BJ (cell line): ENCODE measurements at regions of chr17 and their contacts with region 1.

Region 1: GRCh38 chr17:32659419-32659842 is 172.6 kb downstream of the CDK5R1 start:
- DNase-seq: peak; percentile 12
- H3K4me3 ChIP-seq: no peak overlapping the region
- H3K27me3 ChIP-seq: no peaks in the 10 kb centered on the region
- CTCF ChIP-seq: peak; percentile 94

Region 2: GRCh38 chr17:32569171-32570080 is 90.0 kb before region 1 on chr17:
- CTCF ChIA-PET with region 1: no interaction called
- POLR2A ChIA-PET with region 1: no interaction called
- DNase-seq: no peak
- H3K4me3 ChIP-seq: no peak overlapping the region
- H3K27me3 ChIP-seq: no peaks in the 10 kb centered on the region
- CTCF ChIP-seq: no peak

Region 3: GRCh38 chr17:32627239-32627996 is 32.0 kb before region 1 on chr17:
- CTCF ChIA-PET with region 1: no interaction called
- POLR2A ChIA-PET with region 1: no interaction called
- DNase-seq: no peak
- H3K4me3 ChIP-seq: no peak overlapping the region
- H3K27me3 ChIP-seq: no peaks in the 10 kb centered on the region
- CTCF ChIP-seq: no peak

Region 4: DNA sequence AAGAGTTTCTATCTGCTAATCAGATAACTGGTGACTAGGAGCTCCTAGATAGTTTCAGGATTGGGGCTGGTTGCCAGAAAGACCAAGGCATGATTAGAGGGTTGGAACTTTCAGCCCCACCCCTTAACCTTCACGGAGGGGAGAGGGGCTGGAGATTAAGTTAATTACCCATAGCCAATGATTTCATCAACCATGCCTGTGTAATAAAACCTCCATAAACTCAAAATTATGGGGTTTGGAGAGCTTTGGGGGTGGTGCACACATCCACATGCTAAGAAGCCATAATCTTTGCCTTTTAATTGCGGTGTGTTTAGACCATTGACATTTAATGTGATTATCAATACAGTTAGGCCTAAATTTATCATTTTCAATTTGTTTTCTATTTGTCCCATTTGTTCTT is 11.0 kb before region 1 on chr17:
- CTCF ChIA-PET with region 1: interaction called, 12 read pairs
- POLR2A ChIA-PET with region 1: no interaction called
- DNase-seq: no peak
- H3K4me3 ChIP-seq: no peak overlapping the region
- H3K27me3 ChIP-seq: no peaks in the 10 kb centered on the region
- CTCF ChIP-seq: no peak

Region 5: DNA sequence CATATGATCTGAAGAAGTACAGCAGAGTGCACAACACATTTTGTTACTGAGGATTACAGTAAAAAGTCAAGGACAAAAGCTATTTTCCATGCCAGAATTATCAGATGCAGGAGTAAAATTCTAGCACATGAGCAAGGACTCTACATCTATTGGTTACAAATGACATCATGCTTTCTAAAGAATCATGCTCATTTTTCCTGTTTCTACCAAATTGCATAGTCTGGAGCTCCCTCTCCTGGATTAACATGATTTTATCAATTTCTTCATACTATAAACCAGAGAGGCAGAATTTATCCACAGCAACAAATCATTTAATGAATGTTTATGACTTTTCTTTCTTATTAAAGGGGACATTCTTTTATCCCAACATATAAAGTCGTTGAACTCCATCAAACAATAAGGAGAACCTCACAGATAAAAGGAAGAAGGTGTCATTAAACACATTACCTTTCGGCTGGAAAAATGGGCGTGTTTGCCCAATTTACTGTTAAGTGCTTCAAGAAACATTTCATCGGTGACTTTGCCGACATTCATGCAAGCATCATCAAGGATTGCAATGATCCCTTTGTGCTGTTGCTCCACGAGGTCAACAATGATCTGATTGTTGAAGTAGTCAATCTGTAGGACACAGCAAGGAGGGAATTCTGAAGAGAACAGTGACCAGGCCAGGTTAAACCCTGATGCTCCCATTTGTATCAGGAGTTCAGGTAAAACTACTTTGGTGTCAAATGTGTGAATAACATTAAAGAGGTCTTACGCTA is 95.8 kb after region 1 on chr17:
- CTCF ChIA-PET with region 1: interaction called, 10 read pairs
- POLR2A ChIA-PET with region 1: no interaction called
- DNase-seq: peak; percentile 27
- H3K4me3 ChIP-seq: no peak overlapping the region
- H3K27me3 ChIP-seq: no peaks in the 10 kb centered on the region; the same call in 1 of the 2 replicates
- CTCF ChIP-seq: peak; percentile 44